ENCODE measurements at regions of chr15 and their contacts with region 1.

Region 1: DNA sequence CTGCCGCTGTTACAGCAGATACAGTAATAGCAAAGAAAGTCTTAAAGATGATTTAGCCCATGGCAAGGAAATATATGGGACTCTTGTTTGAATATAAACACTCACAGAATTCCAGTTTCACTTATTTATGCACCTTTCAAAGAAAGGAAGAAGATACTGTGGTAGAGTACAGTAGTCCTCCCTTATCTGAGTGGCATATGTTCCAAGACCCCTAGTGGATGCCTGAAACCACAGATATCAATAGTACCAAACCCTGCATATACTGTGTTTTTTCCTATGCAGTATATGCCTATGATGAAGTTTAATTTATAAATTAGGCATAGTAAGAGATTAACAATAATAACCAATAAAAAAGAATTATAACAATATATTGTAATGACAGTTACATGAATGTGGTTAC is 8.2 kb downstream of the MAP2K1 start:
- DNase-seq: no peak
- H3K4me3 ChIP-seq: no peak overlapping the region
- H3K27ac ChIP-seq: no peak overlapping the region
- H3K4me1 ChIP-seq: peaks cover 8% of the 10 kb centered on the region
- H3K27me3 ChIP-seq: no peaks in the 10 kb centered on the region
- CTCF ChIP-seq: 0 out of 2 replicates have a peak, but pooled peaks have one; percentile 17

Region 2: GRCh38 chr15:66264859-66265513 is 129.9 kb before region 1 on chr15:
- CTCF ChIA-PET with region 1: no interaction called
- POLR2A ChIA-PET with region 1: interaction called, 10 read pairs
- intact Hi-C with region 1: no loop called
- DNase-seq: no peak
- H3K4me3 ChIP-seq: no peak overlapping the region
- H3K27ac ChIP-seq: no peak overlapping the region
- H3K4me1 ChIP-seq: peaks cover 13% of the 10 kb centered on the region
- H3K27me3 ChIP-seq: peaks cover 6% of the 10 kb centered on the region
- CTCF ChIP-seq: no peak

Region 3: GRCh38 chr15:66433726-66434125 is 38.8 kb after region 1 on chr15:
- CTCF ChIA-PET with region 1: no interaction called
- POLR2A ChIA-PET with region 1: no interaction called
- intact Hi-C with region 1: no loop called
- DNase-seq: no peak
- H3K4me3 ChIP-seq: no peak overlapping the region
- H3K27ac ChIP-seq: no peak overlapping the region
- H3K4me1 ChIP-seq: peaks cover 6% of the 10 kb centered on the region
- H3K27me3 ChIP-seq: no peaks in the 10 kb centered on the region
- CTCF ChIP-seq: no peak

Region 4: DNA sequence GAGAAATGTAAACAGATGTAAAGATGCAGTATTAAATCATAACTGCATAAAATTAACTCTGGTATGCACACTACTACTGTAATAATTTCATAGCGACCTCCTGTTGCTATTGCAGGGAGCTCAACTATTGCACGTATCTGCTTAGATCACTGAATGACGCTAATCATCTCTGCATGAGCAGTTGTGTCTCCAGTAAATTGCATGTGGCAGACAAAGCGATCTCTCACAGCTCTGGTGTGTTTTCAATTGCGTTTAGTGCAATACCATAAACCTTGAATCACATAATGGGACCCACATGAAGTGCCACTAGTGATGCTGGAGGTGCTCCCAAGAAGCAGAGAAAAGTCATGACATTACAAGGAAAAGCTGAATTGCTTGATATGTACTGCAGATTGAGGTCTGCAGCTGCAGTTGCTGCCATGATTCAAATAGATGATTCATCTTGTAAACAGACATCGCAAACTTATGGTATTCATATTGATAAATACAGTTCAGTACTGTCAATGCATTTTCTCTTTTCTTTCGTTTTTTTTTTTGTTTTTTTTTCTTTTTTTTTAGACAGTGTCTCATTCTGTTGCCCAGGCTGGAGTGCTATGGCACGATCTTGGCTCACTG is 201.1 kb after region 1 on chr15:
- CTCF ChIA-PET with region 1: no interaction called
- POLR2A ChIA-PET with region 1: no interaction called
- intact Hi-C with region 1: no loop called
- DNase-seq: peak; percentile 31
- H3K4me3 ChIP-seq: no peak overlapping the region
- H3K27ac ChIP-seq: no peak overlapping the region
- H3K4me1 ChIP-seq: no peaks in the 10 kb centered on the region
- H3K27me3 ChIP-seq: no peaks in the 10 kb centered on the region
- CTCF ChIP-seq: no peak

Measured in A673 (cell line).